Gastrocnemius medialis (tissue), 4 donors: ENCODE measurements at regions of chr6 and their contacts with region 1.

Region 1: DNA sequence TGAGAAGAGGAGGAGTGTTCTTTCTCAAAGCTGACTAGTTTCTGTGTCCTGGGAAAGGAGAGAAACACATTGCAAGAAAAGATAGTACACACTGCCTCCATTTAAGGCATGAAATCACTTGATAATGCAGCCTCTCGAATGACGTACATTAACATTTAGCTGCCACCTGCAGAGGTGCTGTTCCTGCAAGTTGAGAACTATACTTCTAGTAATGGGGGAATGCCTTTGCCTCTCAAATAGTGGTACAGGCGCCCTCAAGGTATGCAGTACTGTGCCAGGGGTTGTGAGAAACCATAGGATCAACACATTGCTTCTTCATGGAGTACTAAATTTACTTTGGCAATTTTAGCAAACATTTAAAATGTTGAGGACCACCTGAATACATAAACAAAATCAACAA is 20.1 kb downstream of the IMPG1 start:
- DNase-seq: no peak
- ATAC-seq: no peak
- H3K4me3 ChIP-seq: no peak overlapping the region
- H3K27ac ChIP-seq: no peak overlapping the region
- H3K4me1 ChIP-seq: no peaks in the 10 kb centered on the region
- H3K27me3 ChIP-seq: no peaks in the 10 kb centered on the region
- CTCF ChIP-seq: no peak
- POLR2A ChIP-seq: no peak

Region 2: DNA sequence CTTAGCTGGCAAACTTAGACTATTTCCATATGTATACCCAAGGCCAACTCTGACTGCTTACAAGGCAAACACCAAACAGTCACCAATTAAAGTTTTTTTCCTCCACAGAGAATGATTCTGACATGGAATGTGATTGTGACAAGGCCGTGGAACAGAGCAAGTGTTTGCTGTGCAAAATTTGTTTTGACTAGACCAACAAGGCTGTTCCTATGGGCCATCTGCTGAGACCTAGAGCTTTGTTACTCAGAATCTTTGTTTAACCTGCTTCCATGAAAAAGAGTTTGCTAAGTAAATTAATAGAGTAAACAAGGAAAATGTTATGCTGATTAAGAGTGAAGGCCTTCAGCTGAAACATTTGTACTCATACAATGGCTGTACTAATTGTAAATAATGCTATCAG is 71.7 kb after region 1 on chr6:
- in situ Hi-C with region 1: no loop called
- intact Hi-C with region 1: loop called (anchors 2 kb)
- DNase-seq: no peak
- ATAC-seq: no peak
- H3K4me3 ChIP-seq: no peak overlapping the region
- H3K27ac ChIP-seq: no peak overlapping the region
- H3K4me1 ChIP-seq: no peaks in the 10 kb centered on the region
- H3K27me3 ChIP-seq: no peaks in the 10 kb centered on the region
- CTCF ChIP-seq: no peak
- POLR2A ChIP-seq: no peak